ENCODE measurements at regions of chr15 and their contacts with region 1.

Region 1: GRCh38 chr15:70815644-70816043 is 38.3 kb downstream of the LARP6 start:
- DNase-seq: peak; percentile 46
- ATAC-seq: peak; percentile 40; the same call in 1 of the 2 replicates
- H3K4me3 ChIP-seq: no peak overlapping the region
- H3K27ac ChIP-seq: no peak overlapping the region
- H3K4me1 ChIP-seq: peaks cover 5% of the 10 kb centered on the region
- H3K27me3 ChIP-seq: no peaks in the 10 kb centered on the region
- CTCF ChIP-seq: no peak
- POLR2A ChIP-seq: no peak
- RAD21 ChIP-seq: no peak

Region 2: DNA sequence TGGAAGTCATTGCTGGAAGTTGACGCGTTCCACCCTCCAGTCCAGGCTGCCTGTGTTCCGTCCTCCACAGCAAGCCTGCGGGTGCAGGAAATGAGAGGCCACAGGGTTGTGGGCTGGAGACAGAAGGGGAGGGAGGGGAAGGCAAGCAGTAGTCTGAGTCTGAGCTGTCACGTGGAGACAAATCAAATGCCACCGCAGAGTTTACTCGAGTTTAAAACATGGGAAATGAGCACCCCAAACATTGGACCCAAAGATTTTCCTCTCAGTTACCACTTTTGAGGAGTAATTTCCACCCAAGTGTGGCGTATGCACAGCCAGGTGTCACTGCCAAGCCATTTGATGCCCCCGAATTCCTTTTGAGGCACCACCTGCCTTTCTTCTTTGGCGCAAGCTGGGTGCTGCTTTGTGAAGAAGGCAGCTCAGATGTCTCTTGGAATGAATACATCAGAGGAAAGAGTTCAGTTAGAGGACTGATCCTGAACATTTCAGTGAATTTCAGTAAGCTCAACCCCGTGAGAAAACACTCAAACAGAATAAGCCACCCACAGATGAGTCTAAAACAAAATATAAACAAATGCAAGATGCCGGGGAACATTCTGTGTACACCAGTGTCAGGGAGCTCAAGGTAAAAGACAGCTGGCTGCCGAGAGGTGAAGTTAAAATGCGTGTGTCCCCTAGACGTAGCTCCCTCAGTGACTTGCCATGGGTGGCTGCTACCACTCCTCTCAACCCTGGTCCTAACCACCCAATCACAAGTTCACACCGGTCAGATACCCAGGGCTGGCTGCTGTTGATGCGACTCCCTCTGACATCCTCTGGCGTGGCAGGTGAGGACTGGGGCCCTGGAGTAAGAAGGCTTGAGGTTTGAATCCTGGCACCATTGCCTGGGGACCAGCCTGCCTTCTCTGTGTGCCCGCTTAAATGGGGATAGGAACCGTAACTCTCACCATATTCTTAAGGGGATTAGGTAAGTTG is 256.1 kb before region 1 on chr15:
- CTCF ChIA-PET with region 1: no interaction called
- POLR2A ChIA-PET with region 1: no interaction called
- dilution Hi-C with region 1: no loop called
- in situ Hi-C with region 1: no loop called
- intact Hi-C with region 1: no loop called
- DNase-seq: peak; percentile 44
- ATAC-seq: peak; percentile 89
- H3K4me3 ChIP-seq: no peak overlapping the region
- H3K27ac ChIP-seq: no peak overlapping the region
- H3K4me1 ChIP-seq: peaks cover 11% of the 10 kb centered on the region
- H3K27me3 ChIP-seq: peaks cover 70% of the 10 kb centered on the region
- CTCF ChIP-seq: no peak
- POLR2A ChIP-seq: no peak
- RAD21 ChIP-seq: no peak

Region 3: DNA sequence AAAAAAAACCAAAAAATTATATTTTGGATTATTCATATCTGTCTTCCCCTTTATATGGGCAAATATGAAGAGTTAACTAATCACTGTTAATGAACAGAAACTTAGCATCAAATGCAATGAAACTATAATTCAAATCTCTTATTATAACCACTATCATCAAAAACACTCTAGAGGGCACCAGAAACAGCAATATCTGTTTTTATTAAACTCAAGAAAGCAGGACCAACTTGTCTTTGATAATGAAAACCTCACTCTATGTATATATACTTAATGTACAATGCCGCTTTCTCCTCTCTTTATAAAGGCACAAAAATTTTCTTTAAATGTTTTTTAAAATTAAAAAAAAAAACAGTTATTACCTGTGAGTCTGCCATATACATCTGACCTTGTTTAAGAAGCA is 145.0 kb before region 1 on chr15:
- CTCF ChIA-PET with region 1: interaction called, 4 read pairs
- POLR2A ChIA-PET with region 1: no interaction called
- dilution Hi-C with region 1: no loop called
- in situ Hi-C with region 1: loop called (anchors 10 kb)
- intact Hi-C with region 1: no loop called
- DNase-seq: no peak
- ATAC-seq: no peak
- H3K4me3 ChIP-seq: no peak overlapping the region
- H3K27ac ChIP-seq: no peak overlapping the region
- H3K4me1 ChIP-seq: peaks cover 8% of the 10 kb centered on the region
- H3K27me3 ChIP-seq: no peaks in the 10 kb centered on the region
- CTCF ChIP-seq: peak; percentile 30; the same call in 1 of the 2 replicates
- POLR2A ChIP-seq: no peak
- RAD21 ChIP-seq: peak; percentile 34; the same call in 1 of the 2 replicates

Region 4: GRCh38 chr15:70679919-70680231 is 135.8 kb before region 1 on chr15:
- CTCF ChIA-PET with region 1: interaction called, 5 read pairs
- POLR2A ChIA-PET with region 1: no interaction called
- dilution Hi-C with region 1: no loop called
- in situ Hi-C with region 1: loop called (anchors 10 kb)
- intact Hi-C with region 1: loop called (anchors 1 kb)
- DNase-seq: no peak
- ATAC-seq: no peak
- H3K4me3 ChIP-seq: no peak overlapping the region
- H3K27ac ChIP-seq: no peak overlapping the region
- H3K4me1 ChIP-seq: peaks cover 4% of the 10 kb centered on the region; the same call in 1 of the 2 replicates
- H3K27me3 ChIP-seq: no peaks in the 10 kb centered on the region
- CTCF ChIP-seq: no peak
- POLR2A ChIP-seq: no peak
- RAD21 ChIP-seq: no peak

Region 5: DNA sequence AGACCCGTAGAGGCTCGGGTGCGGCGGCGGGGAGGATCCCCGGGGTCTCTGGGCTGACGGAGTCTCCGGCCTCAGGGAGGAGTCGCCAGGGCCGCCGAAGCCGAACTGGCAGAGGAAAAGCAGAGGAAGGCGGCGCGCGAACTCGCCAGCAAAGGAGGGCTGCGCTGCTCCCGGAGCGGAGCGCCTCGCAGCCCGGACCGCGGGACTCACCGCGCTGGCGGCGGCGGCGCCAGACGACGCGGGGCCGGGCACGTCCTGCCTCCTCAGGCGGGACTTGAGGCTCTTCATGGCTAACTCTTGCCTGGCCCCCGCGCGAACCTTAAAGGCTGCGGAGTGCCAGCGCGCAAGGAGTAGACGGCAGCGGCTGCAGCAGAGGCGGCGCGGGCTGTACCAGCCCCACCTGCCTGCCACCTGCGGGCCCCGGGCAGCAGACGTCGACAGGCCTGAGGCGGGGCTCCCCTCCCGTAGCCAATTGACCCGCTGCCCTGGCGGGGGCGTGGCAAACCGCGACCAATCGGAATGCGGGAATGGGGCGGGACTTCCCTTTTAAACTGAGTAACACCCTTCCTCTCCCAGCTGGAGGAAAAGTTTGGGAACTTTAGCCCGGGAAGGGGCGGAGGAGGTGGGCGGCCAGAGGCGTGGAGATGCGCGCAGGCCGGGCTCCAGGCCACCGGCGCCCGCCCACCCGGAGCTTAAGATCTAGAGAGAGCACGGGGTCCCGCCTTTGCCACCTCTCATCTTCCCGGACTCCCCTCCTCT is 52.3 kb before region 1 on chr15 and contains the start of gene UACA:
- CTCF ChIA-PET with region 1: interaction called, 4 read pairs
- POLR2A ChIA-PET with region 1: no interaction called
- dilution Hi-C with region 1: no loop called
- in situ Hi-C with region 1: no loop called
- intact Hi-C with region 1: loop called (anchors 2 kb)
- DNase-seq: peak; percentile 96
- ATAC-seq: peak; percentile 90
- H3K4me3 ChIP-seq: peak within 1 kb of the TSS; percentile 86
- H3K27ac ChIP-seq: peak within 1 kb of the TSS; percentile 90
- H3K4me1 ChIP-seq: peaks cover 7% of the 10 kb centered on the region
- H3K27me3 ChIP-seq: no peaks in the 10 kb centered on the region
- CTCF ChIP-seq: no peak
- POLR2A ChIP-seq: peak; percentile 77
- RAD21 ChIP-seq: no peak
- total RNA-seq, gene UACA: 505 and 507 TPM in 2 replicates

Region 6: DNA sequence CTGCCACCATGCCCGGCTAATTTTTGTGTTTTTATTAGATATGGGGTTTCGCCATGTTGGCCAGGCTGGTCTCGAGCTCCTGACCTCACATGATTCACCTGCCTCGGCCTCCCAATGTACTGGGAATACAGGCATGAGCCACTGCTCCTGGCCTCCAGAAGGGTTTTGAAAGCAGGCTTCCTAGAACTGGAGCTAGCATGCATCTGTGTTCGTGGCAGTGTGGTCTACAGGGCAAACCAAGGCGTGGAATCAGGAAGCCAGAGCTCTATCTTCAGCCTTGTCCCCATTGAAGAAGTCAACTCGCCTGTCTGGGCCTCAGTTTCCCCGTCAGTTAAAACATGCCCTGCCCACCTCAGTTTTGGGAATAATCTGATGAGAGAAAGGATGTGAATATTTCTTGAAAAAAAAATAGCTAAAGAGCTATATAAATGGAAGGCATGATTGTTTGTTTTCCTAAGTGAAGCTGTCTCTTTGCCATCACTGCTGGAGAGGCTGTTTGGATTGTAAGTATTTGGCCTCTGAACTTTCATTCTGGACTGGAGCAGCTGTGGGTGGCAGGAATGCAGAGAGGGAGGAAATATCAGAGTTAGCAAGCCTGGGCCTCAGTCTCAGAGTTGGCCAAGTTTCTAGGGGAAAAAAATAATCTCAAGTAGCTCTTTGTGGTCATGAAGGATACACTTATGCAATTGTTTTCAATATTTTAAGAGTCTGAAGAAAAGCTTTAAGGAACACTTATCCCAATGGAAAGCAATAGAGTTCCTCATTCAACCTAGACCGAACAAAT is 15.8 kb before region 1 on chr15:
- CTCF ChIA-PET with region 1: interaction called, 12 read pairs
- POLR2A ChIA-PET with region 1: no interaction called
- dilution Hi-C with region 1: no loop called
- in situ Hi-C with region 1: no loop called
- intact Hi-C with region 1: no loop called
- DNase-seq: peak; percentile 99
- ATAC-seq: peak; percentile 80
- H3K4me3 ChIP-seq: no peak overlapping the region
- H3K27ac ChIP-seq: peak overlapping the region; percentile 97
- H3K4me1 ChIP-seq: peaks cover 33% of the 10 kb centered on the region
- H3K27me3 ChIP-seq: no peaks in the 10 kb centered on the region
- CTCF ChIP-seq: no peak
- POLR2A ChIP-seq: no peak
- RAD21 ChIP-seq: no peak

Measured in IMR-90 (cell line).